ENCODE measurements at regions of chr2 and their contacts with region 1.

Region 1: GRCh38 chr2:69716555-69717114 is 25.3 kb upstream of the ANXA4 start:
- DNase-seq: peak; percentile 71
- ATAC-seq: peak; percentile 60
- H3K4me3 ChIP-seq: no peak overlapping the region
- H3K27ac ChIP-seq: no peak overlapping the region
- H3K4me1 ChIP-seq: 0 out of 2 replicates have a peak, but pooled peaks cover 3% of the 10 kb centered on the region
- H3K27me3 ChIP-seq: no peaks in the 10 kb centered on the region
- CTCF ChIP-seq: 0 out of 2 replicates have a peak, but pooled peaks have one; percentile 10
- POLR2A ChIP-seq: no peak
- RAD21 ChIP-seq: peak; percentile 14

Region 2: GRCh38 chr2:69375494-69376353 is 340.9 kb before region 1 on chr2:
- CTCF ChIA-PET with region 1: no interaction called
- POLR2A ChIA-PET with region 1: no interaction called
- dilution Hi-C with region 1: no loop called
- in situ Hi-C with region 1: no loop called
- intact Hi-C with region 1: loop called (anchors 1 kb)
- DNase-seq: peak; percentile 27
- ATAC-seq: peak; percentile 47
- H3K4me3 ChIP-seq: no peak overlapping the region
- H3K27ac ChIP-seq: no peak overlapping the region
- H3K4me1 ChIP-seq: no peaks in the 10 kb centered on the region
- H3K27me3 ChIP-seq: no peaks in the 10 kb centered on the region
- CTCF ChIP-seq: peak; percentile 52
- POLR2A ChIP-seq: no peak
- RAD21 ChIP-seq: peak; percentile 55

Region 3: DNA sequence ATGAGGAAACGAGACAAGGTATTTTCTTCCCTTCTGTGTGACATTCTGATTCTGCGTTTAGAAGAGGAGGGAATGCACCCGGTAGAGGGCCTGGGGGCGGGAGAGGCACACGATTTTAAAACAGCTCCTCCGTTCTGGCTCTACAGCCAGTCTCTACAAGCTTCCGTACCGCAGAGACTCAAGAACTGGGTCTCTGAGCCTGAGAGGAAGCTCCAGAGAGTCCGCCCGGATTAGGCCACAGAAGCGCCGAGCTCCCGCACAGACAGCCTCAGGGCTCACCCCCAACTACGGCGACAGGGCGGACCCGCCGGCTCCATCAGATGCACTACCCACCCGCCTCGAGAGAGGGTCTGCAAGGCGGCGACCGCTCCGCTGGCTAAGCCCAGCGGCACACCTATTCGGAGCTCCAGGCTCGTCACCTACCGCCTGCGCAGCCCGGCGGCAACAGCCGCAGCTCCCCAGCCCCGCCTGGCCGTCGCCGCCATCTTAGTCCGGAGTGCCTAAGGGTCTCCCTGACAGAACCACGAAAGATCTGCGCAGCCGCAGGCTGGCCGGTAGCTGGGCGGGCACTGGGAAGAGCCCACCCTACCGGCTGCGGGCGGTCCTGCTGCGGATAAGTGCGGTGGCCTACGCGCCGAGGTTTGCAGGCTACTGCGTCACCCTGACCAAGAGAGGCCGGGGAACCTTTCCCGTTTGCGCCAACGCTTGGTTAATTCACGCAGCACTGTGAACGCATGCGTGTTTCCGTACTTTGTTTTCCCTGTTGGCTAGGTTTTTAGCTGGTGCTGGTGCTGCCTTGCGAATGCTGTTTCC is 279.5 kb before region 1 on chr2 and contains the start of gene NFU1:
- CTCF ChIA-PET with region 1: interaction called, 3 read pairs
- POLR2A ChIA-PET with region 1: no interaction called
- dilution Hi-C with region 1: no loop called
- in situ Hi-C with region 1: no loop called
- intact Hi-C with region 1: loop called (anchors 5 kb)
- DNase-seq: peak; percentile 97
- ATAC-seq: peak; percentile 99
- H3K4me3 ChIP-seq: peak within 1 kb of the TSS; percentile 59
- H3K27ac ChIP-seq: peak within 1 kb of the TSS; percentile 83
- H3K4me1 ChIP-seq: peaks cover 4% of the 10 kb centered on the region
- H3K27me3 ChIP-seq: no peaks in the 10 kb centered on the region
- CTCF ChIP-seq: peak; percentile 74
- POLR2A ChIP-seq: peak; percentile 88
- RAD21 ChIP-seq: peak; percentile 36
- total RNA-seq, gene NFU1: 24.0 and 40.0 TPM in 2 replicates

Region 4: DNA sequence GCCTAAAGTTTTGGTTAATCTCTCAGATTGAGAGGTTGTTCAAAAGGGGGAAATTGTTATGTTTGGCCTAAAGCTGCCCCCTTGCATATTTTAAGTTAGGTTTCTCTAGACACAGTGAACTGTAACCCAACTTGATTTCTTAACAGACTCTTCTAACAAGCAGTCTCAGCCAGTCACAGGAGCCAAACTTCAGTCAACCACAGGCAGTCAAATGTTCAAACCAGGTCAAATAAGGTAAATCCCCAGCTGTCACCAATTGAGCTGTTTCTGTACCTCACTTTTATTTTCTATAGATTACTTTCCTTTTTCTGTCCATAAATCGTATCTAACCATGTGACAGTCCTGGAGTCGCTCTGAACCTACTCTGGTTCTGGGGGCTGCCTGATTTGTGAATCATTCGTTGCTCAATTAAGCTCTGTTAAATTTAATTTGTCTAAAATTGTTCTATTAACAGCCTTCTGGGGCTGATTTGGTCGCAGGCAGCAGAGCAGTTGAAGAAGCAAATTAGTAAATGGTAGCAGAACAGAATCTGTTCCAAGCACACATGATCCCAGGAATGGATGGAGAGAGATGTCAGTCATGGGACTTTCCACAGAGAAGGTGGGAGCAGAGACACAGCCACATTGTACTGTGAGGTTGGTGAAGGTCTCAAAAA is 263.0 kb before region 1 on chr2:
- CTCF ChIA-PET with region 1: no interaction called
- POLR2A ChIA-PET with region 1: no interaction called
- dilution Hi-C with region 1: no loop called
- in situ Hi-C with region 1: no loop called
- intact Hi-C with region 1: no loop called
- DNase-seq: no peak
- ATAC-seq: no peak
- H3K4me3 ChIP-seq: no peak overlapping the region
- H3K27ac ChIP-seq: no peak overlapping the region
- H3K4me1 ChIP-seq: 0 out of 2 replicates have a peak, but pooled peaks cover 2% of the 10 kb centered on the region
- H3K27me3 ChIP-seq: no peaks in the 10 kb centered on the region
- CTCF ChIP-seq: no peak
- POLR2A ChIP-seq: no peak
- RAD21 ChIP-seq: no peak

Region 5: GRCh38 chr2:69559442-69560146 is 157.0 kb before region 1 on chr2:
- CTCF ChIA-PET with region 1: interaction called, 3 read pairs
- POLR2A ChIA-PET with region 1: no interaction called
- dilution Hi-C with region 1: no loop called
- in situ Hi-C with region 1: loop called (anchors 5 kb)
- intact Hi-C with region 1: loop called (anchors 1 kb)
- DNase-seq: peak; percentile 62
- ATAC-seq: peak; percentile 74
- H3K4me3 ChIP-seq: no peak overlapping the region
- H3K27ac ChIP-seq: no peak overlapping the region
- H3K4me1 ChIP-seq: peaks cover 18% of the 10 kb centered on the region
- H3K27me3 ChIP-seq: no peaks in the 10 kb centered on the region
- CTCF ChIP-seq: peak; percentile 66
- POLR2A ChIP-seq: no peak
- RAD21 ChIP-seq: peak; percentile 81

Region 6: DNA sequence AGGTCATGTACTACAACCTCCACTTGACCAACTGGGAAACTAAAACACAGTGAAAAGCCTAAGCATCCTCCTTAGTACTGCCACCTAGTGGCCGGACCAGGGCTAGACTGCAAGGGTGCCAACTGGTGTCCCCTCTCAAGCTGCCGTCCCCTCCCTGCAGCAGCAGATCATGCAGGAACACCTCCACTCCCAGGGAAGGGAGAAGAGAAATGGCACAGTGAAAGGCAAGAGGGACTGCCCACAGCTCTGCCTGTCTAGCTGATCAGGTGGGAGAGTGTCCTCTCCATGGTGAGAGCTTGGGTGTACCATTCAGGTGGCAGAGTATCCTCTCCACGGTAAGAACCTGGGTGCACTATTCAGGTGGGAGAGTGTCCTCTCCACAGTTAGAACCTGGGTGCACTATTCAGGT is 151.2 kb before region 1 on chr2:
- CTCF ChIA-PET with region 1: no interaction called
- POLR2A ChIA-PET with region 1: no interaction called
- dilution Hi-C with region 1: no loop called
- in situ Hi-C with region 1: loop called (anchors 5 kb)
- intact Hi-C with region 1: loop called (anchors 1 kb)
- DNase-seq: no peak
- ATAC-seq: no peak
- H3K4me3 ChIP-seq: no peak overlapping the region
- H3K27ac ChIP-seq: no peak overlapping the region
- H3K4me1 ChIP-seq: peaks cover 30% of the 10 kb centered on the region
- H3K27me3 ChIP-seq: no peaks in the 10 kb centered on the region
- CTCF ChIP-seq: peak; percentile 47
- POLR2A ChIP-seq: no peak
- RAD21 ChIP-seq: peak; percentile 18; the same call in 1 of the 2 replicates

Measured in IMR-90 (cell line).